ENCODE measurements at regions of chr11 and their contacts with region 1.

Region 1: DNA sequence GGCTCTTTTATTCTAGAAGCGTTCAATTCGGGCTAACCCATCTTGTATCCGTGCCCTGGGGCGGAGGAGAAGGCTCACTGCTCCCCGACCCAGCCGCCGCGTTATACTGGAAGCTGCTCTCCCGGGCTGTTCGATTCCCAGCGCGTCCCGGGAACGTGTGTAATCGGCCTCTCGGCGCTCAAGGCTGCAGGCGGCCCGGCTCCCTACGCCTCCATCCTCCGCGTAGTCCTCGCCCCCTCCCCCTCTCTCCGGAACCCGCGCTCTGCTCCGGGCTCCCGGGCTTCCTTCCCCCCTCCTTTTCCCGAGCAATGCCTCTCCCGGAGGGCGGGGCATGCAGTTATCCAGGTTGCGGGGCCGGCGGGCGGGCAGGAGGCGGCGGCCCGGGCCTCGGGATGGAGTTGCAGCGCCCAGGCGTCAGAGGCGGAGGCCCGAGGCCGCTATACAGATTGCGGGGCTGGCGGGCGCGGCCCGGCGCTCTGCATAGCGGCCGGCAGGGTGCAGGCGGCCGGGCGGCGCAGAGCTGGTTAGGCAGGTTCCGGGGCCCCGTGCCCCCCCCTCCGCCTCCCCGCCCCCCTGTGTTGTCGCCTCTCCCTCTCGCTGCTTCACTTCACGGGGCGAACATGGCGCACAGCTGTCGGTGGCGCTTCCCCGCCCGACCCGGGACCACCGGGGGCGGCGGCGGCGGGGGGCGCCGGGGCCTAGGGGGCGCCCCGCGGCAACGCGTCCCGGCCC is at the start of gene KMT2A:
- DNase-seq: peak; percentile 92
- H3K4me3 Mint-ChIP-seq: peak within 1 kb of the TSS; percentile 91
- H3K27ac Mint-ChIP-seq: peak within 1 kb of the TSS; percentile 89
- H3K4me1 Mint-ChIP-seq: peaks cover 45% of the 10 kb centered on the region
- H3K27me3 Mint-ChIP-seq: peaks cover 3% of the 10 kb centered on the region
- total RNA-seq, gene KMT2A: 78.4 and 87.8 TPM in 2 replicates

Region 2: DNA sequence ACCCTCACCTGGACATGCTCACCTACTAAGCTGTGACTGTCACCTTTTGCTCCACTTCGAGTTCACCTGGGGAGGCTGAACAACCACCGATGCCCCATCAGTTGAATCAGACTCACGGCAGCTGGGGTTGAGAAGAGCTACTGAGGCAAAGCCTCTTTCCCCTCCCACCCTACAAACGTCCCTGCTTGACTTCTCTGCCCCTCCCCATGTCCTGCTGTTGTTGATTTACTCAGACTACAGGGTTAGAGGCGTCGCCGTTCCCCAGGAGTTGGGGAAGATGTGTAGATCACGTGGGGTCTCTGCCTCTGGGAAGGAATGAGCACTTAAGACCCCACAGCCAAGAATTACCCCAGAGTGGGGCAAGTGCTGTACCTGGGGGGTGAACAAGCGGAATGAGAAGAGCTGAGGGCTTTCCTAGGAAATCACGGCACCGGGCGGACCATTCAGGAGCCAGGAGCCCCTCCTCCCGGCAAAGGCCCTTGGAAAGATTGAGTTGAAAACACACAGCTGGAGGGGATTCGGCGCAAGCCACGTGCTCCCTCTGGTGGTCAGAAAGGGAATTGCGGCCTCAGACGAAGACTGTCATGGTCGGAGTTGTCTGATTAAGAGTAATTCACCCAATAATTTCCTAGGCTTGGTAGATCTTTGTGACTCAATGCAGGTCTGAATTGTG is 618.6 kb before region 1 on chr11:
- intact Hi-C with region 1: loop called (anchors 5 kb)
- DNase-seq: peak; percentile 83
- H3K4me3 Mint-ChIP-seq: peak overlapping the region; percentile 70
- H3K27ac Mint-ChIP-seq: peak overlapping the region; percentile 98
- H3K4me1 Mint-ChIP-seq: peaks cover 79% of the 10 kb centered on the region
- H3K27me3 Mint-ChIP-seq: no peaks in the 10 kb centered on the region

Region 3: DNA sequence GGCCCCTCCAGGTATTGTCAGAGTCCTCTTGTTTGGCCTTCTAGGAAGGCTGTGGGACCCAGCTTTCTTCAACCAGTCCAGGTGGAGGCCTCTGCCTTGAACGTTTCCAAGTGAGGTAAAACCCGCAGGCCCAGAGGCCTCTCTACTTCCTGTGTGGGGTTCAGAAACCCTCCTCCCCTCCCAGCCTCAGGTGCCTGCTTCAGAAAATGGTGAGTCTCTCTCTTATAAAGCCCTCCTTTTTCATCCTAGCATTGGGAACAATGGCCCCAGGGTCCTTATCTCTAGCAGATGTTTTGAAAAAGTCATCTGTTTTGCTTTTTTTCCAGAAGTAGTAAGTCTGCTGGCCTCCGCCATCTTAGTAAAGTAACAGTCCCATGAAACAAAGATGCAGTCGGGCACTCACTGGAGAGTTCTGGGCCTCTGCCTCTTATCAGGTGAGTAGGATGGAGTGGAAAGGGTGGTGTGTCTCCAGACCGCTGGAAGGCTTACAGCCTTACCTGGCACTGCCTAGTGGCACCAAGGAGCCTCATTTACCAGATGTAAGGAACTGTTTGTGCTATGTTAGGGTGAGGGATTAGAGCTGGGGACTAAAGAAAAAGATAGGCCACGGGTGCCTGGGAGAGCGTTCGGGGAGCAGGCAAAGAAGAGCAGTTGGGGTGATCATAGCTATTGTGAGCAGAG is 131.4 kb before region 1 on chr11 and contains the start of gene CD3E:
- intact Hi-C with region 1: loop called (anchors 2 kb)
- DNase-seq: peak; percentile 60
- H3K4me3 Mint-ChIP-seq: peak within 1 kb of the TSS; percentile 99
- H3K27ac Mint-ChIP-seq: peak within 1 kb of the TSS; percentile 98
- H3K4me1 Mint-ChIP-seq: peaks cover 62% of the 10 kb centered on the region
- H3K27me3 Mint-ChIP-seq: no peaks in the 10 kb centered on the region
- total RNA-seq, gene CD3E: 630 and 646 TPM in 2 replicates

Region 4: GRCh38 chr11:118359295-118359958 is 76.6 kb before region 1 on chr11 and contains the start of gene UBE4A:
- intact Hi-C with region 1: loop called (anchors 1 kb)
- DNase-seq: peak; percentile 94
- H3K4me3 Mint-ChIP-seq: peak within 1 kb of the TSS; percentile 95
- H3K27ac Mint-ChIP-seq: peak within 1 kb of the TSS; percentile 89
- H3K4me1 Mint-ChIP-seq: peaks cover 39% of the 10 kb centered on the region
- H3K27me3 Mint-ChIP-seq: no peaks in the 10 kb centered on the region
- total RNA-seq, gene UBE4A: 44.1 and 46.0 TPM in 2 replicates

Region 5: GRCh38 chr11:118415739-118416284 is 20.2 kb before region 1 on chr11:
- intact Hi-C with region 1: loop called (anchors 2 kb)
- DNase-seq: peak; percentile 14
- H3K4me3 Mint-ChIP-seq: no peak overlapping the region
- H3K27ac Mint-ChIP-seq: no peak overlapping the region
- H3K4me1 Mint-ChIP-seq: no peaks in the 10 kb centered on the region
- H3K27me3 Mint-ChIP-seq: no peaks in the 10 kb centered on the region

Region 6: GRCh38 chr11:118488480-118489109 is 52.5 kb after region 1 on chr11:
- intact Hi-C with region 1: loop called (anchors 1 kb)
- DNase-seq: peak; percentile 64
- H3K4me3 Mint-ChIP-seq: no peak overlapping the region
- H3K27ac Mint-ChIP-seq: no peak overlapping the region
- H3K4me1 Mint-ChIP-seq: peaks cover 7% of the 10 kb centered on the region
- H3K27me3 Mint-ChIP-seq: no peaks in the 10 kb centered on the region

Region 7: GRCh38 chr11:118572061-118572980 is 136.3 kb after region 1 on chr11 and contains the start of gene ARCN1:
- intact Hi-C with region 1: loop called (anchors 2 kb)
- DNase-seq: peak; percentile 69
- H3K4me3 Mint-ChIP-seq: peak within 1 kb of the TSS; percentile 98
- H3K27ac Mint-ChIP-seq: peak within 1 kb of the TSS; percentile 96
- H3K4me1 Mint-ChIP-seq: peaks cover 51% of the 10 kb centered on the region
- H3K27me3 Mint-ChIP-seq: no peaks in the 10 kb centered on the region
- total RNA-seq, gene ARCN1: 162 and 165 TPM in 2 replicates

Region 8: GRCh38 chr11:119030329-119031049 is 594.4 kb after region 1 on chr11 and contains the start of gene SLC37A4:
- intact Hi-C with region 1: no loop called
- DNase-seq: peak; percentile 99
- H3K4me3 Mint-ChIP-seq: peak within 1 kb of the TSS; percentile 80
- H3K27ac Mint-ChIP-seq: peak within 1 kb of the TSS; percentile 86
- H3K4me1 Mint-ChIP-seq: peaks cover 15% of the 10 kb centered on the region
- H3K27me3 Mint-ChIP-seq: no peaks in the 10 kb centered on the region
- total RNA-seq, gene SLC37A4: 24.3 and 28.7 TPM in 2 replicates

Measured in activated T-helper 1 cell treated with anti-CD3 and anti-CD28 coated beads, Interleukin-12 subunit alpha, Interleukin-12 subunit beta, Interleukin-2, Interleukin-4 antibody, amounts not matched to agents 30 ng/mL and 10 ng/mL and 1 ng/mL, durations not matched to agents 14 hours and 24 hours and 36 hours (primary cell).